MCF 10A (cell line): ENCODE measurements at regions of chr5 and their contacts with region 1.

Region 1: DNA sequence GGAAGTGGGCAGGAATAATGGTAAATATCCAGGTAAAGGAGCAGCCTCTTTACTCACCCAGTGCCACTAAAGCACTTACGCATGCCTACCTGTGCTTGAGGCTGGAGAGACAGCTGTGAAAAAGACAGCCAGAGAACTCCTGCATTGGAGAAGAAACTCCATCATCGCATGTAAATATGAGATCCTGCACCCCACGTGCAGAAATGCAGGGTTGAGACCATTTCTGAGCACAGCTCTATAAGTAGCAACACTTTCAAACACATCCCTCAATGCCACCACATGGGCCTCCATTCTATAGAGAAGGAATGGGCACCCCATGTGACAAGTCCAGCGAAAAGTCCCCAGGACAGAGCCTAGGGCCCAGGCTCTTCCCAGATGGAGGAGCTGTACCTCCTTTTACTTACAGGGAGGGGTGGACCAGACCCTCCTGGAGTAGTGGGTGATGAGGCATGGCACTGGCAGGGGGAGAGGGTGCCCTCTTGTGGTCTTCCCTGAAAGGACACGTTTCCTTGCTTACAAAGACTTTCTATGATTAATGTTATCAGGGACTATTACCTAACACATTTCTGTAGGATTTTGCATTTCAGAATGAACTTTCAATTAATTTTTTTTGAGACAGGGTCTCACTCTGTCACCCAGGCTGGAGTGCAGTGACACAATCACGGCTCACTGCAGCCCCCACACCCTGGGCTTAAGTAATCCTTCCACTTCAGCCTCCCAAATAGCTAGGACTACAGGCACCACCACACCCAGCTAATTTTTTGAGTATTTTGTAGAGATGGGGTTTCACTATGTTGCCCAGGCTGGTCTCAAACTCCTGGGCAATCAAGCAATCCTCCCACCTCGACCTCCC is 55.3 kb upstream of the IL17B start:
- DNase-seq: peak; percentile 75
- H3K4me3 Mint-ChIP-seq: no peak overlapping the region
- H3K27ac Mint-ChIP-seq: no peak overlapping the region
- H3K4me1 Mint-ChIP-seq: peaks cover 13% of the 10 kb centered on the region
- H3K27me3 Mint-ChIP-seq: no peaks in the 10 kb centered on the region
- CTCF ChIP-seq: peak; percentile 98

Region 2: DNA sequence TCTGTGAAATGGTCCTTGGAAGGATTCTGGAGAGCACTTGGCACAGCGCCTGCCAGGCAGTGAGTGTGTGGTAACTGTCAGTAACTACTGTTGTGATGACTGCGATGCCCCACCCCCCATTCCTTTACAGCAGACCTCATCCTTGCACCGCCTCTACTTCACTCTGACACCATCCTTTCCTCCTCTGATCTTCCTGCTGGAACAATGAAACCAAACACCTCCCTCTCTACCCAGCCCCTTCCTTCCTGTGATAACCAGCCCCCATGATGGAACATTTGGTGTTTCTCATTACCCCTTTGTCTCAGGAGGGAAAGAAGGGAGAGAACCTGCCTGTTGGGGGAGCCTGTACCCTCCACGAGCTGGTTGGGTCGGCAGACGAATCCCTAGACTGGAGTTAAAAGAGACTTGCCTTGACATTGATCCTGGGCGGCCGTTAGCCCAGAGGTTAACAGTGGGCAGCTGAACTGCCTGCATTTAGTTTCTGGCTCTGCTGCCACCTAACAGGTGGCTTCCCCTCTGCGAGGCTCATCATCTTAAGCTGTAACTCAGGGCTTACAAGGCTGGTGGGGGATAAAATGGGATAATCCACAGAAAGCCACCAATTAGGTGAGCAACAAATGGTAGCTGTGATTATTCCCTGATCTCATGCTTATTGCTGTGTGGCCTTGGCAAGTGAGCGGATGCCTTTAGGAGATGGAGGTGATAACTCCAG is 123.3 kb before region 1 on chr5:
- CTCF ChIA-PET with region 1: interaction called, 225 read pairs
- POLR2A ChIA-PET with region 1: interaction called, 3 read pairs
- intact Hi-C with region 1: no loop called
- DNase-seq: peak; percentile 50
- H3K4me3 Mint-ChIP-seq: no peak overlapping the region
- H3K27ac Mint-ChIP-seq: no peak overlapping the region
- H3K4me1 Mint-ChIP-seq: peaks cover 5% of the 10 kb centered on the region
- H3K27me3 Mint-ChIP-seq: no peaks in the 10 kb centered on the region
- CTCF ChIP-seq: no peak

Region 3: GRCh38 chr5:149400304-149400703 is 34.1 kb before region 1 on chr5:
- CTCF ChIA-PET with region 1: interaction called, 662 read pairs
- POLR2A ChIA-PET with region 1: no interaction called
- intact Hi-C with region 1: no loop called
- DNase-seq: no peak
- H3K4me3 Mint-ChIP-seq: no peak overlapping the region
- H3K27ac Mint-ChIP-seq: no peak overlapping the region
- H3K4me1 Mint-ChIP-seq: no peaks in the 10 kb centered on the region
- H3K27me3 Mint-ChIP-seq: no peaks in the 10 kb centered on the region
- CTCF ChIP-seq: no peak

Region 4: GRCh38 chr5:149422366-149423048 is 11.9 kb before region 1 on chr5:
- CTCF ChIA-PET with region 1: interaction called, 81 read pairs
- POLR2A ChIA-PET with region 1: interaction called, 3 read pairs
- intact Hi-C with region 1: no loop called
- DNase-seq: no peak
- H3K4me3 Mint-ChIP-seq: no peak overlapping the region
- H3K27ac Mint-ChIP-seq: no peak overlapping the region
- H3K4me1 Mint-ChIP-seq: no peaks in the 10 kb centered on the region
- H3K27me3 Mint-ChIP-seq: peaks cover 16% of the 10 kb centered on the region
- CTCF ChIP-seq: no peak

Region 5: DNA sequence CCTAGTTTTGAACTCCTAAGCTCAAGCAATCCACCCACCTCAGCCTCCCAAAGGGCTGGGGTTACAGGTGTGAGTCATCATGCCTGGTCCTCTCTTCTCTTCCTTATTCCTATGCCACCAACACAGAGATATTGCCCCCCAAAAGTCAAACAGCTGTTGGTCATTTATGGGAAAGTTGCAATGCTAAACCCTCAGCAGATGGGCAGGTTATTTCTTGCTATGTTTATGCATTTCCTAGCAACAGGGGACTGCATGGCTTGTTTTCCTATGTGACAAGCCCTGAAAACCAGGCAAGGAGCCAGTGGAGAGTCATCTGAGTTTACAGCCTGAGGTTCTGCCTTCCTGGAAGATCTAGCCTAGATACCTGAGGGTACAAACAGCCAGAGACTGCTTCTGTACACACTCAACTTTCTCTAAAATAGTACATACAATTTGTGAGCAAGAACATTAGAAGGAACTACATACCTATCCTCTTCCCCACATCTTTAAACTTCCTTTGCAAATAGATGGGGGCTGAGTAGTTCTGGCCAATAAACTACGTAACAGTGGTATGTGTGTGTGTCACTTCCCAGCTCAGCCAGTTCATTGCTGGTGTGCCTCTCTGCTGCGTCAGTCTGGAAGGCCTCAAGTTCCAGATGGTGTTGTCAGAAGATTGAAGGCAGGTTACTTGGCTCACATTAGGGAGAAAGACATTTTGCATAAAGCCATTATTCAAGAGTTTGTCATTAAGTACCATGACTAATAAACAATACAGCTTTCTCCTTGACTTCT is 51.5 kb after region 1 on chr5:
- CTCF ChIA-PET with region 1: interaction called, 103 read pairs
- POLR2A ChIA-PET with region 1: interaction called, 1,058 read pairs
- intact Hi-C with region 1: no loop called
- DNase-seq: peak; percentile 97
- H3K4me3 Mint-ChIP-seq: no peak overlapping the region
- H3K27ac Mint-ChIP-seq: peak overlapping the region; percentile 98
- H3K4me1 Mint-ChIP-seq: peaks cover 57% of the 10 kb centered on the region
- H3K27me3 Mint-ChIP-seq: no peaks in the 10 kb centered on the region
- CTCF ChIP-seq: no peak

Region 6: GRCh38 chr5:149605998-149606724 is 171.8 kb after region 1 on chr5:
- CTCF ChIA-PET with region 1: interaction called, 10 read pairs
- POLR2A ChIA-PET with region 1: interaction called, 9 read pairs
- intact Hi-C with region 1: no loop called
- DNase-seq: peak; percentile 99
- H3K4me3 Mint-ChIP-seq: no peak overlapping the region
- H3K27ac Mint-ChIP-seq: peak overlapping the region; percentile 91
- H3K4me1 Mint-ChIP-seq: peaks cover 48% of the 10 kb centered on the region
- H3K27me3 Mint-ChIP-seq: no peaks in the 10 kb centered on the region
- CTCF ChIP-seq: no peak